Transverse colon (tissue), 4 donors: ENCODE measurements at regions of chr3 and their contacts with region 1.

Region 1: DNA sequence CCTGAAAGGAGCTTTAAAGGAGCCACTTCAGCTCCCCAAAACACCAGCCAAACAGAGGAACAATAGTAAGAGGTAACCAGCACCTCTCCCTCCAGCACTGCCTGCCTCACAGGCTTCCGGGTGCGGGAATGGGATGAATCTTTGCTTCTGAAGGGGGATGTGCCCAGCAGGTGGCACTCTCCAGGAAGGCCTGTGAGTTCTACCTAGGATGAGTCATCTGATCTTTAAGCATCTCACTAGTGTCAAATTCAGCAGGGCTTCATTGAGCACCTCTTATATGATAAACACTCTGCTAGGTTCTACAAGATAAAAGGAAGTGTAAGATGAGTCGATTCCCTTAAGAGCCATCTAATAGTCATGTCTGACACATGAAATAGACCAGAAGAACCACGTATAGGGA is 237.4 kb upstream of the UMPS start:
- DNase-seq: peak; percentile 69
- H3K4me3 ChIP-seq: no peak overlapping the region
- H3K27ac ChIP-seq: no peak overlapping the region
- H3K4me1 ChIP-seq: peaks cover 0 to 14% (median 1%) of the 10 kb centered on the region in 4 donors
- H3K27me3 ChIP-seq: no peaks in the 10 kb centered on the region
- CTCF ChIP-seq: peak; percentile 22 to 56 (median 44)
- EP300 ChIP-seq: no peak
- POLR2A ChIP-seq: no peak

Region 2: GRCh38 chr3:124439603-124440002 is 53.2 kb before region 1 on chr3:
- in situ Hi-C with region 1: no loop called
- intact Hi-C with region 1: no loop called
- DNase-seq: no peak
- H3K4me3 ChIP-seq: no peak overlapping the region
- H3K27ac ChIP-seq: no peak overlapping the region
- H3K4me1 ChIP-seq: no peaks in the 10 kb centered on the region
- H3K27me3 ChIP-seq: no peaks in the 10 kb centered on the region
- CTCF ChIP-seq: no peak
- EP300 ChIP-seq: no peak
- POLR2A ChIP-seq: no peak

Region 3: DNA sequence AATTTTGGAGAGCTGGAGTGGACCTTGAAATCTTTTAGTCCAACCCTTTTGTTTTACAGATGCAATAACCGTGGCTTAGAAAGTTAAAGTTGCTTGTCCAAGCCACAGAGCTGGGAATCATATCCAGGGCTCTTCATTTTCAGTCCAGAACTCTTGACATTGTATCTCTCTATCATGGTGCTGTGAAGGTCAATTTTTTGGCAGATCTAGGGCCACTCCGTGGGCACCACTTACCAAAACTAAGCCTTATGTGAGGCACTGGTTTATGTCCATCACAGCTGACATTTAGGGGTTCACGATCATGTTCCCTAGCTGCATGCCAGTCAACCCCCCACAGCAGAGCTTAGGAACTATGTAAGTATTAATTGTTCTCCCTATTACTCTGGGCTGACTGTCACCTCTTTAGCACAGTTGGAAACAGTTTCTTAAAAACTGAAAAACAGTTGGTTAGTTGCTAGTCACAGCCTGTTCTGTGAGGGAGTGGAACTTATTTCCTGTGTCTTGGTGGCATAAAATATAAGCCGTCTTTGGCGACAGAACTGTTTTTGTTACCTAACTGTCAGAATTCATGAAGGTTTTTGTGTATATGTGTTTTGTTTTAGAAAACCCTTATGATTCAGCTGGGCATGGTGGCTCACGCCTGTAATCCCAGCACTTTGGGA is 47.9 kb after region 1 on chr3:
- in situ Hi-C with region 1: loop called in 1 of 4 experiments (anchors 10 kb)
- intact Hi-C with region 1: no loop called
- DNase-seq: no peak
- H3K4me3 ChIP-seq: no peak overlapping the region
- H3K27ac ChIP-seq: no peak overlapping the region
- H3K4me1 ChIP-seq: no peaks in the 10 kb centered on the region
- H3K27me3 ChIP-seq: no peaks in the 10 kb centered on the region
- CTCF ChIP-seq: no peak
- EP300 ChIP-seq: no peak
- POLR2A ChIP-seq: no peak

Region 4: GRCh38 chr3:124559881-124560574 is 67.2 kb after region 1 on chr3:
- in situ Hi-C with region 1: loop called in 1 of 4 experiments (anchors 10 kb)
- intact Hi-C with region 1: no loop called
- DNase-seq: peak; percentile 75
- H3K4me3 ChIP-seq: no peak overlapping the region
- H3K27ac ChIP-seq: peak overlapping the region; percentile 39 to 49 (median 42)
- H3K4me1 ChIP-seq: peaks cover 4 to 32% (median 18%) of the 10 kb centered on the region in 4 donors
- H3K27me3 ChIP-seq: no peaks in the 10 kb centered on the region
- CTCF ChIP-seq: peak; percentile 76 to 91 (median 81)
- EP300 ChIP-seq: no peak
- POLR2A ChIP-seq: no peak